Activated B cell treated with CpG ODN at 0.5 μM for 24 hours (primary cell): ENCODE measurements at regions of chr7 and their contacts with region 1.

Region 1: GRCh38 chr7:18458830-18459229 is 36.7 kb upstream of the HDAC9 start:
- DNase-seq: no peak
- ATAC-seq: peak; percentile 18
- H3K4me3 Mint-ChIP-seq: no peak overlapping the region
- H3K27ac Mint-ChIP-seq: peak overlapping the region; percentile 41
- H3K4me1 Mint-ChIP-seq: peaks cover 34% of the 10 kb centered on the region
- H3K27me3 Mint-ChIP-seq: no peaks in the 10 kb centered on the region
- CTCF ChIP-seq: no peak

Region 2: GRCh38 chr7:18421297-18422002 is 37.4 kb before region 1 on chr7:
- CTCF ChIA-PET with region 1: no interaction called
- POLR2A ChIA-PET with region 1: no interaction called
- intact Hi-C with region 1: loop called (anchors 5 kb)
- DNase-seq: no peak
- ATAC-seq: peak; percentile 31
- H3K4me3 Mint-ChIP-seq: no peak overlapping the region
- H3K27ac Mint-ChIP-seq: no peak overlapping the region
- H3K4me1 Mint-ChIP-seq: peaks cover 18% of the 10 kb centered on the region
- H3K27me3 Mint-ChIP-seq: no peaks in the 10 kb centered on the region
- CTCF ChIP-seq: no peak

Region 3: GRCh38 chr7:18445916-18446520 is 12.8 kb before region 1 on chr7:
- CTCF ChIA-PET with region 1: no interaction called
- POLR2A ChIA-PET with region 1: no interaction called
- intact Hi-C with region 1: loop called (anchors 2 kb)
- DNase-seq: no peak
- ATAC-seq: no peak
- H3K4me3 Mint-ChIP-seq: no peak overlapping the region
- H3K27ac Mint-ChIP-seq: no peak overlapping the region
- H3K4me1 Mint-ChIP-seq: peaks cover 10% of the 10 kb centered on the region
- H3K27me3 Mint-ChIP-seq: no peaks in the 10 kb centered on the region
- CTCF ChIP-seq: no peak

Region 4: DNA sequence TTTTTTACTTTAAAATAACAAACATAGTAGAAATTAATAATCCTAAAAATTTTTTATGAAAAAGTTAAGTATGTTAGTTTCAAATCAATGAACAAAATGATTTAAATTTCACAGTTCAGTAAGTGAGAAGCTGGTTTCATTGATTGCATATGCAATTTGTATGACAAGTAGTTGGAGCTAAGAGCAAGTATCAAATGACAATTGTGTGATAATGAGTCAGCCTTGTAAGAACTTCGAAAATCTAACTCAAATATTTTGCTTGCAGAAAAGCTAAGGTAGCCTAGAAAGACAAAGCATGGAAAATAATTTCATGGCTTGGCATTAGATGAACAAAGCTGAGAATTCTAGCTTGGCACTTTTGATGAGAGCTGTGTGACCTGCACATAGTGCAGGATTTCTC is 148.2 kb after region 1 on chr7:
- CTCF ChIA-PET with region 1: no interaction called
- POLR2A ChIA-PET with region 1: no interaction called
- intact Hi-C with region 1: no loop called
- DNase-seq: no peak
- ATAC-seq: no peak
- H3K4me3 Mint-ChIP-seq: no peak overlapping the region
- H3K27ac Mint-ChIP-seq: no peak overlapping the region
- H3K4me1 Mint-ChIP-seq: no peaks in the 10 kb centered on the region
- H3K27me3 Mint-ChIP-seq: no peaks in the 10 kb centered on the region
- CTCF ChIP-seq: no peak